Posterior vena cava (tissue), 2 donors: ENCODE measurements at regions of chr19 and their contacts with region 1.

Region 1: GRCh38 chr19:46428239-46429135 is at the start of gene PNMA8C:
- DNase-seq: peak; percentile 92
- total RNA-seq, gene PNMA8C: 0.37 to 1.2 TPM

Region 2: DNA sequence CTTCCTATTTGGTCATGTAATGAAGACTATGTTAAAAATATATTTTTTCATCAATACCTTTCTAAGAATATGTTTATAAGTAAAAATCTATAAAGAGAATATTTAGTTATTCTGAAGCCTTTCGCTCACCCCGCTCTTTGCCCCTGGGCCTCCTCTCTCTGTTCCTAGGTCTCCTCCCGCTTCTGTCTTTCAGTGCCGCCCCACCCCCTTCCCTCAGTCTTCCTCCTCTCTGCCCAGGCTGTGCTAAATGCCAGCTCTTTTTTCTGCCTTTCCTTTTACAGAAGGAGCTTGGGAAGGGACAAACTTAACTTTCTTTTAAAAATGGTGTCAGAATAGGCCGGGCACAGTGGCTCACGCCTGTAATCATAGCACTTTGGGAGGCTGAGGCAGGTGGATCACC is 108.9 kb before region 1 on chr19:
- intact Hi-C with region 1: no loop called
- DNase-seq: no peak

Region 3: DNA sequence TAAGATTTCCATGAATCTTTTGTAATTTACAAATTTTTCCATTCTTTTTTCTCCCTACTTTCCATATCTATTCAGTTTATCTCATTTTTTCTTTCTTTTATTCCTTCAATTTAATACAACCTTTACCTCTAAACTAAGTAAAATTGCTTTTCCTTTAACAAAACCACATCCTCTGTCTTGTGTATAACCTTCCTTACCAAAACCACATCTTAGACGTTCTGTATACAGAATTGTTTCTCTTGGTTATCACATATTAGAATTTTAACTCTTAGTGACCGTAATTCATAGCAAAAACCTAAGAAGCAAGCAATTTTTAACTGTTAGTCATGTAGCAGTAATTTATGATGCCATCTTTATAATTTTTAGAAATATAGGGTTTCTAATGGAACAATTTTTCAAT is 66.6 kb before region 1 on chr19:
- intact Hi-C with region 1: no loop called
- DNase-seq: no peak

Region 4: GRCh38 chr19:46442808-46443450 is 14.4 kb after region 1 on chr19:
- intact Hi-C with region 1: loop called in 1 of 2 experiments (anchors 2 kb)
- DNase-seq: no peak